Heart right ventricle (tissue), 16 donors: ENCODE measurements at regions of chr6 and their contacts with region 1.

Region 1: DNA sequence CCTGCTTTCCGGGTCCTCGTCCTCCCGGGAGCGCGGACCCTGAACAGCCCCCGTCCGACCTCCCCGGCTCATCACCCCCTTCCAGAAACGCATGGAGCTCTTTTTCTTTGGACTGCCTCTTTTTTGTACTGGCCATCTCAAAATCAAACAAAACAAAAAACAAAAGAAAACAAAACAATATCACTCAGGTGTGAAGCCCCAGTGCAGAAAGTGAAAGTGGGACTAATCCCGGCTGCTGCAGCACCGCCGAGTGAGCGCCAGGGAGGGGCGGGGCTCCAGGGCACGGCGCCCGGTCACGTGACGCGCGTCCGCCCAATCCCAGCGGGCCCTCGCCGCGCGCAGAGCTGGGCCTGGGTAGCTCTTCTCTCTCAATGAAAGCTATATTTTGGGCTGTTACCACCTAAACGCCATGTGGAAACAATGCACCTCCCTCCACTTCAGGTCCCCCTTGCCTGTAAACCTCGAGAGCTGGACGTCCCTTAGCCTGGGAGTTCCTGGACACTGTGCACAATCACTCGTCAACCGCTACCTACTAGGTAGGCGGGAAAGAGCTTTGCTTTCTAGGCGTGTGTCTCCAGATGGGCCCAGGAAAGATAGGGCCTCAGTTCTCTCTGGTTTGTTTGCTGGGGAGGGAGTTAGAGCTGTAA is 93.7 kb upstream of the PRDM1 start:
- DNase-seq: peak; percentile 74 to 86
- ATAC-seq: peak; percentile 91 to 96 (median 94)
- H3K4me3 ChIP-seq: peak overlapping the region; percentile 51 to 74 (median 64)
- H3K27ac ChIP-seq: peak overlapping the region in 6 of 10 donors; percentile 4 to 85 (median 66)
- H3K4me1 ChIP-seq: peaks cover 3 to 44% (median 34%) of the 10 kb centered on the region in 9 donors
- H3K27me3 ChIP-seq: peaks cover 0 to 100% (median 98%) of the 10 kb centered on the region in 7 donors
- CTCF ChIP-seq: no peak

Region 2: GRCh38 chr6:105492706-105493673 is 499.4 kb before region 1 on chr6:
- intact Hi-C with region 1: loop called in 5 of 10 experiments (anchors 5 to 10 kb)
- DNase-seq: no peak
- ATAC-seq: peak in 6 of 8 donors; percentile 34 to 52 (median 42)
- H3K4me3 ChIP-seq: no peak overlapping the region
- H3K27ac ChIP-seq: peak overlapping the region in 9 of 10 donors; percentile 18 to 68 (median 45)
- H3K4me1 ChIP-seq: peaks cover 9 to 59% (median 40%) of the 10 kb centered on the region in 9 donors
- H3K27me3 ChIP-seq: no peaks in the 10 kb centered on the region
- CTCF ChIP-seq: no peak

Region 3: DNA sequence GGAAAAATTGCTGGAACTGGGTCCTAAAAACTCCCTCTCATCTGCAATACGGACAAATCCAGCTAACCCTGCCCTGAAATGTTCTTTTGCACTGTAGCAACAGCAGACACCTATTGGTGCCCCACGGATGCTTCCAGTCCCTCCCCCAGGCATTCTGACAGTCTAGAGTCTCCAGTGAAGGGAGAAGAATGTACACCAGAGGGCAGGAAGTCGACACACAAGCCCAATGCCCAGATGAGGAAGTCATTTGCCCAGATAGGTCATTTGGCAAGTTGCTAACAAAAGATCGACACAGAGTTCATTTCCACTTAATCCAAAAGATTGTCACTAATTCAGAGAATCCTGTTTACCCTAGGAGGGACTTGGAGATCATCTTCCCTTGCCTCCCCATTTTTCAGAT is 199.3 kb before region 1 on chr6:
- intact Hi-C with region 1: loop called in 1 of 10 experiments (anchors 5 kb)
- DNase-seq: no peak
- ATAC-seq: peak in 5 of 8 donors; percentile 44 to 76 (median 59)
- H3K4me3 ChIP-seq: no peak overlapping the region
- H3K27ac ChIP-seq: peak overlapping the region in 1 of 10 donors; percentile 71
- H3K4me1 ChIP-seq: peaks cover 0 to 52% (median 9%) of the 10 kb centered on the region in 9 donors
- H3K27me3 ChIP-seq: no peaks in the 10 kb centered on the region
- CTCF ChIP-seq: peak in 3 of 9 donors; percentile 16 to 38 (median 27)

Region 4: DNA sequence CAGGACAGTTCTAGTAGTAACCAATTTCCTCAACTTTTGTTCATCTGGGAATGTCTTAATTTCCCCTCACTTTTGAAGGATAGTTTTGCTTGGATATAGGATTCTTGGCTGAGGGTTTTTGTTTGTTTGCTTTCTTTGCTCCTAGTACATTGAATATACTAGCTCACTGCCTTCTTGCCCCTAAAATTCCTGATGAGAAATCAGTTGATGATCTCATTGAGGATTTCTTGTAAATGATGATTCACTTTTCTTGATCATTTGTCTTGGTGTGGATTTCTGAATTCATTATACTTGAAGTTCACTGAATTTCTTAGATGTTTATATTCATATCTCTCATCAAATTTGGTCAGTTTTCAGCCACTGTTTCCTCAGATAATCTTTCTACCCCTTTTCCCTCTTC is 44.6 kb after region 1 on chr6:
- intact Hi-C with region 1: no loop called
- DNase-seq: no peak
- ATAC-seq: no peak
- H3K4me3 ChIP-seq: no peak overlapping the region
- H3K27ac ChIP-seq: peak overlapping the region in 1 of 10 donors; percentile 7
- H3K4me1 ChIP-seq: no peaks in the 10 kb centered on the region
- H3K27me3 ChIP-seq: no peaks in the 10 kb centered on the region
- CTCF ChIP-seq: no peak

Region 5: DNA sequence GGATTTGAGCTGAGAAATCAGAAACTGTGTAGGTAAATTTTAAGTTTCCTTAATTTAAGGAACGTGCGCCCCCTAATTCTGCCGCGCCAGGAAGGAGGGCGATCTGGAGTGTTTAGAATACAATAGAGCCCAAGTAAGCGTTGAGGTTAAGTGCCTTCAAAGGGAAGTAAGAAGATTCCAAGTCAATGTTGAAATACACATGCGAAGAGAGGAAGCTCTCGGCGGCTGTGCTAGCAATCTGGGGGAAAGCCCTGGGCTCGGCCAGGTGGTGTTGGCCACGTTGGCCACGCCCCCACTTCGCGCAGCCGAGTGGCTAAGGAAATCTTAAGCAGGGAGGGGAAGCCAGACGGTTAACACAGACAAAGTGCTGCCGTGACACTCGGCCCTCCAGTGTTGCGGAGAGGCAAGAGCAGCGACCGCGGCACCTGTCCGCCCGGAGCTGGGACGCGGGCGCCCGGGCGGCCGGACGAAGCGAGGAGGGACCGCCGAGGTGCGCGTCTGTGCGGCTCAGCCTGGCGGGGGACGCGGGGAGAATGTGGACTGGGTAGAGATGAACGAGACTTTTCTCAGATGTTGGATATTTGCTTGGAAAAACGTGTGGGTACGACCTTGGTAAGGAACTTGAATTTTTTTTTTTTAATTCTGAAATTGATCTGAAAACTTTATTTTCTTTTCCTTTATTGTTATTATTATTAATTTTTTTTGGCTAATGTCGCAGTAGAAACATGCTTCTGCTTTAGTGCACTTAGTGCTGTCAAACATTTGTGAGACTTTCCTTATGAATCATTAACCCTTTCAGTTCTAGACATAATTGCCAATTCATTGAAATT is 93.8 kb after region 1 on chr6 and contains the start of gene PRDM1:
- intact Hi-C with region 1: loop called in 6 of 10 experiments (anchors 2 to 10 kb)
- DNase-seq: peak; percentile 72
- ATAC-seq: peak; percentile 51 to 80 (median 73)
- H3K4me3 ChIP-seq: peak within 1 kb of the TSS; percentile 39 to 69 (median 56)
- H3K27ac ChIP-seq: peak within 1 kb of the TSS; percentile 33 to 91 (median 68)
- H3K4me1 ChIP-seq: peaks cover 0 to 78% (median 20%) of the 10 kb centered on the region in 9 donors
- H3K27me3 ChIP-seq: peaks cover 0 to 64% (median 37%) of the 10 kb centered on the region in 7 donors
- CTCF ChIP-seq: peak in 2 of 9 donors; percentile 26 to 29
- total RNA-seq, gene PRDM1: 0.47 to 11.2 (median 2.1) TPM

Region 6: DNA sequence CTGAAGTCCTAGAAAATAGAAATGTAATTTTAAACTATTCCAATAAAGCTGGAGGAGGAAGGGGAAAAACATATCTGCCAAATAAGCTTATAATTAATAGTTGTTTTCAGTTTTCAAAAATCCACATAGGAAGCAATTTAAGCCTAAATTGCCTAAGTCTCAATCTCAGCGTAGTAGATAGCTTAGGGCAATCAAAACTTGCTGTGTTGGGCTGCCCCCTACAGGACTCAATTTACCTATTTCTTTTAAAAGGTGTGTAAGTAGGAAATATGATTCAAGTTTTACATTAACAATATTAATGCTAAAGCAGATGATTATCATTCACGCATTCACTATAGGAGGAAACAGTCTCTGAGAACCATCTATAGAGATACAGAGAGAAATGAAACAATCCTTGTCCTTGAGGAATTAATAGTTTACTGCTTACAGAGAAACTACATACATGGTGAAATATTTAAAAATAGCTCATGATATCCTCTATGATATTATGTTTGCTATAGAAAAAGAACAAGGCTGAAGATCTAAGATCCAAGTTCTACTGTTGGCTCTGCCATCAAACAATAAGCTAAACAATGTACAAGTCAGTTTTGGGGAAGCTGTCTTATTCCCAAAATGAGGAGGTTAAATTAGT is 231.0 kb after region 1 on chr6:
- intact Hi-C with region 1: loop called in 1 of 10 experiments (anchors 10 kb)
- DNase-seq: peak in 1 of 2 donors; percentile 66
- ATAC-seq: peak in 5 of 8 donors; percentile 62 to 75 (median 63)
- H3K4me3 ChIP-seq: no peak overlapping the region
- H3K27ac ChIP-seq: no peak overlapping the region
- H3K4me1 ChIP-seq: peaks cover 0 to 10% (median 0%) of the 10 kb centered on the region in 9 donors
- H3K27me3 ChIP-seq: no peaks in the 10 kb centered on the region
- CTCF ChIP-seq: peak; percentile 40 to 76 (median 66)